K562 (cell line): ENCODE measurements at regions of chr1 and their contacts with region 1.

Region 1: DNA sequence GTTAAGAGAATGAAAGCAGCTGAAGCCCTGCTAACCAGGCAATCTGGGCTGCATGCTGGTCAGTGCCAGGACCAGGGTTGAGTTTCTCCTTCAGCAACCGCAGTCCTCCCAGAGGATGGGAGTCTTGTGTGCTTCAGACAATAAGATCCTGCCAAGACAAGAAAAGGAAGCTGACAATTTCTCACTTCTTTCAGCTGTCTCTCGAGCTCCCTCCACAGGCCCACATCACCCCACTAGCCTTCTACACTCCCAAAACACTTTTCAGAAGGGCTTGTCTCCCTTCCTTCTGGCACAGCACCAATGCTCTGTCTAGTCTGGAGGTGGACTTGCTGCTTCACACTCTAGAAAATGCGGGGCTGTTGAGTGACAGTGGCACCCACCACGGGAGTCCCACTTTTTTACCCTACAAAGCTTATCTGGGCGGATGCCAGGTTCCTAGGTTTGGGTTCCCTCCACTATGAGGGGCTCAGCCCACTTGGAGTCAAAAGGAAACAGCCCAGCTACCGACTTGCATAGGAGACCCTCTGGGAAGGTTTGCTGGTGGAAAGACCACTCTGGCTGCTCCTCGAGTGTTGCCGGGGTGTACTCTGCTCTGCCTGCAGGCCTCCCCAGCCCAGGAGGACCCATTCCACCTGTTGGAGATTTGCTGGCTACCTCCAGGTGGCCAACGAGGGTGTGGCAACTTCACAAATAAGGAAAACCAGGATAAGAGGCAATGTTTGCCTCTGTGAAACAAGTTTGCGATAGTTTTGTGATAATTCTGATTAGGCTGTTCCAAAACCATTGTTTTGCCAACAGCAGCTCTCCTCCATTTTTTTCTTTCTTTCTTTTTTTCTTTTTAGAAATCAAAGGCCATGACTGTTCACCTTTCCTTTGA is 68.9 kb downstream of the TENT5C start:
- DNase-seq: peak; percentile 55 to 81 (median 69)
- ATAC-seq: peak; percentile 83
- H3K4me3 ChIP-seq: no peak overlapping the region
- H3K27ac ChIP-seq: no peak overlapping the region
- H3K4me1 ChIP-seq: peaks cover 10 to 18% of the 10 kb centered on the region in 2 experiments
- H3K27me3 ChIP-seq: no peaks in the 10 kb centered on the region
- CTCF ChIP-seq: peak; percentile 81 to 93 (median 85)
- EP300 ChIP-seq: no peak
- POLR2A ChIP-seq: no peak
- RAD21 ChIP-seq: peak; percentile 88 to 95

Region 2: GRCh38 chr1:117512743-117513321 is 161.9 kb before region 1 on chr1:
- CTCF ChIA-PET with region 1: interaction called, 16 read pairs
- POLR2A ChIA-PET with region 1: interaction called, 3 read pairs
- in situ Hi-C with region 1: no loop called
- intact Hi-C with region 1: loop called (anchors 1 kb)
- DNase-seq: peak; percentile 22 to 32 (median 26)
- ATAC-seq: peak; percentile 62; the same call in 2 of the 3 replicates
- H3K4me3 ChIP-seq: no peak overlapping the region
- H3K27ac ChIP-seq: no peak overlapping the region
- H3K4me1 ChIP-seq: no peaks in the 10 kb centered on the region
- H3K27me3 ChIP-seq: no peaks in the 10 kb centered on the region
- CTCF ChIP-seq: peak; percentile 43 to 90 (median 49); a peak in 4 of 6 replicates
- EP300 ChIP-seq: no peak
- POLR2A ChIP-seq: no peak
- RAD21 ChIP-seq: peak; percentile 90 to 94

Region 3: GRCh38 chr1:117605774-117606648 is 68.7 kb before region 1 on chr1 and contains the start of gene TENT5C:
- CTCF ChIA-PET with region 1: interaction called, 4 read pairs
- POLR2A ChIA-PET with region 1: interaction called, 15 read pairs
- in situ Hi-C with region 1: no loop called
- intact Hi-C with region 1: loop called (anchors 1 kb)
- DNase-seq: peak; percentile 100
- ATAC-seq: peak; percentile 89
- H3K4me3 ChIP-seq: peak within 1 kb of the TSS; percentile 70
- H3K27ac ChIP-seq: peak within 1 kb of the TSS; percentile 58
- H3K4me1 ChIP-seq: peaks cover 40 to 44% of the 10 kb centered on the region in 2 experiments
- H3K27me3 ChIP-seq: no peaks in the 10 kb centered on the region
- CTCF ChIP-seq: peak in 2 of 3 experiments; percentile 18 to 33; a peak in 2 of 6 replicates
- EP300 ChIP-seq: no peak
- POLR2A ChIP-seq: peak; percentile 97
- RAD21 ChIP-seq: peak in 1 of 2 experiments; percentile 6; a peak in 2 of 4 replicates
- polyA plus RNA-seq, gene TENT5C: 3.8 to 5.0 TPM

Region 4: DNA sequence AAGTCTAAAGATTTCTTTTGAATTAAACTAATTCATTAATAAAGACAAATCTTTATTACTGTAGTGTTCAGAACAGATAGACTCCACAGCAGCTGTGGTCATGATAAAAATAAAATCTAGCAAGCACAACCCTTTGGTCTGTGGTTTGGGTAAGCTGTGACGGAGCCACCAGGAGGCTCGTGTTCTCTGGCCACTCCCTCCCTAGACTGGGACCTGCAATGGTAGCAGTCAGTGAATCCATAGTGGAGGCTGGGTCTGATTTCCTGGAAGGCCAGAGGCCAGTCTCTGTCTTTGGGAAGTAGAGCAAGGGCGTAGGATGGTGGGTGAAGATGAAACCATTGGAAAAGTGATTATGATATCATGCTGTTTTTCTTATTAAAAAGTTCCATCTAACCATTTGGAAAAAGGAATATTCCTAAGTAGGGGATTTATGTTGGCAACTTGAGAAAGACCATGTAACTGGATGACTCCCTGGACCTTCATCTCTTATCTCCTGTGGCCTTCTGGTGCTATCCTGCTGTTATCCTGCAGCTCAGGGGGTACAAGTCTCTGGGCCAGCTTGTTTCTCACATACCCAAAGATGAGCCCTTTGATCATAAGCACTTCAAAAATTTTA is 30.0 kb before region 1 on chr1:
- CTCF ChIA-PET with region 1: no interaction called
- POLR2A ChIA-PET with region 1: interaction called, 3 read pairs
- in situ Hi-C with region 1: no loop called
- intact Hi-C with region 1: loop called (anchors 1 kb)
- DNase-seq: peak; percentile 86 to 92 (median 88)
- ATAC-seq: peak; percentile 94
- H3K4me3 ChIP-seq: no peak overlapping the region
- H3K27ac ChIP-seq: peak overlapping the region; percentile 24; the same call in 1 of the 3 replicates
- H3K4me1 ChIP-seq: peaks cover 32 to 39% of the 10 kb centered on the region in 2 experiments
- H3K27me3 ChIP-seq: no peaks in the 10 kb centered on the region
- CTCF ChIP-seq: peak in 2 of 3 experiments; percentile 11 to 23; a peak in 3 of 6 replicates
- EP300 ChIP-seq: peak; percentile 86
- POLR2A ChIP-seq: no peak
- RAD21 ChIP-seq: peak in 1 of 2 experiments; percentile 44; a peak in 2 of 4 replicates

Region 5: DNA sequence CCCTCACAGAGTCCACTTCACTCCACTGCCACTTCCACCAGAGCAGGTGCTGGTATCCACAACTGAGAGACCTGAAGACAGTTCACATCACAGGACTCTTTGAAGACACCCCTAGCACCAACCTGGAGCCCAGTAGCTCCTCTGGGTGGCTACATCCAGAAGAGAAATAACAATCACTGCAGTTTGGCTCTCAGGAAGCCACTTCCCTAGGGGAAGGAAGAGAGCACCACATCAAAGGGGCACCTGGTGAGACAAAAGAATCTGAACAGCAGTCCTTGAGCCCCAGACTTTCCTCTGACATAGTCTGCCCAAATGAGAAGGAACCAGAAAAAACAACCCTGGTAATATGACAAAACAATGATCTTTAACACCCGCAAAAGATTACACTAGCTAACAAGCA is 44.2 kb after region 1 on chr1:
- CTCF ChIA-PET with region 1: no interaction called
- POLR2A ChIA-PET with region 1: no interaction called
- in situ Hi-C with region 1: no loop called
- intact Hi-C with region 1: no loop called
- DNase-seq: no peak
- ATAC-seq: no peak
- H3K4me3 ChIP-seq: no peak overlapping the region
- H3K27ac ChIP-seq: no peak overlapping the region
- H3K4me1 ChIP-seq: no peaks in the 10 kb centered on the region
- H3K27me3 ChIP-seq: no peaks in the 10 kb centered on the region
- CTCF ChIP-seq: no peak
- EP300 ChIP-seq: no peak
- POLR2A ChIP-seq: no peak
- RAD21 ChIP-seq: no peak

Region 6: GRCh38 chr1:117758444-117759316 is 83.9 kb after region 1 on chr1:
- CTCF ChIA-PET with region 1: no interaction called
- POLR2A ChIA-PET with region 1: no interaction called
- in situ Hi-C with region 1: loop called (anchors 5 kb)
- intact Hi-C with region 1: loop called (anchors 2 kb)
- DNase-seq: peak; percentile 80 to 88 (median 84)
- ATAC-seq: peak; percentile 98
- H3K4me3 ChIP-seq: no peak overlapping the region; the same call in 1 of the 2 replicates
- H3K27ac ChIP-seq: no peak overlapping the region
- H3K4me1 ChIP-seq: peaks cover 2 to 10% of the 10 kb centered on the region in 2 experiments; a peak in 3 of 5 replicates
- H3K27me3 ChIP-seq: no peaks in the 10 kb centered on the region; a peak in 1 of 5 replicates
- CTCF ChIP-seq: peak; percentile 85 to 93 (median 90)
- EP300 ChIP-seq: no peak
- POLR2A ChIP-seq: no peak
- RAD21 ChIP-seq: peak; percentile 77 to 92